HCT116 (cell line): ENCODE measurements at regions of chr1 and their contacts with region 1.

Region 1: GRCh38 chr1:6889875-6890480 is 104.7 kb downstream of the CAMTA1 start:
- DNase-seq: peak; percentile 44
- ATAC-seq: peak; percentile 98
- H3K4me3 ChIP-seq: no peak overlapping the region
- H3K27ac ChIP-seq: no peak overlapping the region
- H3K4me1 ChIP-seq: no peaks in the 10 kb centered on the region
- H3K27me3 ChIP-seq: no peaks in the 10 kb centered on the region
- CTCF ChIP-seq: peak; percentile 78 to 91 (median 87)
- POLR2A ChIP-seq: no peak
- RAD21 ChIP-seq: peak; percentile 72

Region 2: DNA sequence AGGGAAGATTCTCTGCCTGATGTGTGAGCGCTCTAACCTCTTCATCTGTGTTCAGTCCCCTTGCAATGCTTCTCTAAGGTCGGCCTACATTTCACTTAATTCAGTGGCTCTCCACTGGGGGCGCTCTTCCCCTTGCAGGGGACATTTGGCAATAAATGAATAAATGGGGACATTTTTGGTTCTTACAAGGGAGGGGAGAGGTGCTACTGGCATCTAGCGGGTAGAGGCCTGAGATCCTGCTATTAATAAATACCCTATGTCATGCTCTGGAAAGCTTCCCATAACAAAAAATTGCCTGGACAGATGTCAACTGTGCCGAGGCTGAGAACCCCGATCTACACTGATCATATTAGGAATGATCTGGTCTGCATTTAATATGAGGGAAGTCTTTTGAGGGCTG is 162.4 kb before region 1 on chr1:
- CTCF ChIA-PET with region 1: no interaction called
- POLR2A ChIA-PET with region 1: no interaction called
- RAD21 ChIA-PET with region 1: no interaction called
- intact Hi-C with region 1: loop called (anchors 1 kb)
- DNase-seq: peak; percentile 71
- ATAC-seq: peak; percentile 91
- H3K4me3 ChIP-seq: no peak overlapping the region
- H3K27ac ChIP-seq: no peak overlapping the region
- H3K4me1 ChIP-seq: peaks cover 2 to 21% of the 10 kb centered on the region in 2 experiments; a peak in 2 of 4 replicates
- H3K27me3 ChIP-seq: no peaks in the 10 kb centered on the region
- CTCF ChIP-seq: peak; percentile 90 to 97 (median 91)
- POLR2A ChIP-seq: no peak
- RAD21 ChIP-seq: peak; percentile 74

Region 3: DNA sequence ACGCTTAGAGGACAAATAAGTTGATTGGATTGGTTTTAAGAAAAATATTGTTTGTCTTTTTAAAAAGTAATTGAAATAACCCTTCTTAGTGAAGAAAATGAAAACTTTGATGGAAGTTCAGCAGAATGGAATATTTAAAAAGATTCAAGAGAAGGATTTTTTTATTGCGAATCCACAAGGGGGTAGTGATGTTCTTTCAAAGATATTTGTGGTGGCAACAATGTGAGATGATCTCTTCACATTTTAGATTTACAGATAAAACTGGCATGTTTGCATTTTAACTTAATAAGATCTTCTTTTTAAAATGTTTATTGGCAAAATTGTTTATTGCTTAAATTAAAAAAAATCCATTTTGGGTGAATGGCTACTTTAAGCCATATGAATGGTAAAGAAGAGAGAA is 95.8 kb before region 1 on chr1:
- CTCF ChIA-PET with region 1: no interaction called
- POLR2A ChIA-PET with region 1: no interaction called
- RAD21 ChIA-PET with region 1: no interaction called
- intact Hi-C with region 1: loop called (anchors 1 kb)
- DNase-seq: peak; percentile 26
- ATAC-seq: no peak
- H3K4me3 ChIP-seq: no peak overlapping the region
- H3K27ac ChIP-seq: no peak overlapping the region
- H3K4me1 ChIP-seq: no peaks in the 10 kb centered on the region
- H3K27me3 ChIP-seq: no peaks in the 10 kb centered on the region
- CTCF ChIP-seq: peak in 2 of 3 experiments; percentile 60 to 62; a peak in 3 of 6 replicates
- POLR2A ChIP-seq: no peak
- RAD21 ChIP-seq: peak; percentile 69; the same call in 1 of the 2 replicates